ENCODE measurements at regions of chr11 and their contacts with region 1.

Region 1: DNA sequence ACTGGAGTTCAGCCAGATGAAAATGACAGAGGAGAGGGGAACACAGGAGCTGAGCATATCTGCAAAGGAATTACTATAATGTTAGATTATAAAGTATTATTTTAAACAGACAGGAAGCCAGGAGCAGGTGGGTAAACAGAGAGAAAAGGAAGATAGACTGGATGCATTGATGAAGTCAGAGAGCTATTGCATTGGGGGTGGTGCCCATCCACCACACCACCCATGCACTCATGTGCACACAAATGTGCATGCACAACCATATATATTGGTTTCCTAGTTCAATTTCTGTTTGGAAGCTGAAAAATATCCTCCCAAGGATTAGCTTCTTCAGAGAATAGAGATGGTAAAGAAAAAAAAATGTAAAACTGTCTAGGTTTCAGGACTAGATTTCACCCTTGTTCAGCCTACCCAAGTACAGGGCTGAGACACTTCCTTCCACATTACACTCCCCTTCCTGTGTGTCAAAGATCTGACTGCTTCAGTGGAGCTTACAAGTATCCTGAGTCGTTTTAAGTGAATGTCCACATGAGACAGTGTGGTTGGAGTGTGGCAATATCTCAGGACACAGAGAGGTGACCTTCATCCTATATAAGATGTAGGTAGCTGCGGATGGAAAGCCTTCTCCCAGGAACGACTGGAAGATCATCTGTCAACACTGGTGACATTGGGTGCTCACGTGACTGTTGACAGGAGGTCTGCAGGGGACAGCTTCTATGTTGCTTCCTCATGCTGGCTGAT is 12.2 kb upstream of the SMPD1 start:
- DNase-seq: no peak
- H3K4me3 ChIP-seq: no peak overlapping the region
- H3K27ac ChIP-seq: no peak overlapping the region
- H3K4me1 ChIP-seq: peaks cover 0 to 12% (median 0%) of the 10 kb centered on the region in 4 donors
- H3K27me3 ChIP-seq: no peaks in the 10 kb centered on the region
- CTCF ChIP-seq: no peak
- EP300 ChIP-seq: no peak
- POLR2A ChIP-seq: no peak

Region 2: DNA sequence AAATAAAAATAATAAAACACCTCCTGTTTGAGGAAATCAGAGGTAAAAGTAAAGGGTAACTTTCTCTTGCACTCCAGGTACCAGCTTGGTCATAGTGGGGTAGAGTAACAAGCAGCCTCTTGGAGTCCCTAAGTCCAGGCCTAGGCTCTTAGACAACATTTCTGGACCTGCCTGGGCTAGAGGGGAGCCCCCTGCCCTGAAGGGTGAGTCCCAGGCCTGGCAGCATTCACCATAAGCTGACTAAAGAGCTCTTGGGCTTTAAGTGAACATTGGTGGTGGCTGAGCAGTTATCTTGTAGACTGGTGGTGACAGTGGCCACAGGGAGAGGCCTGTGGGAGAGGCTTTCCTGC is 454.7 kb before region 1 on chr11:
- intact Hi-C with region 1: no loop called
- DNase-seq: no peak
- H3K4me3 ChIP-seq: no peak overlapping the region
- H3K27ac ChIP-seq: no peak overlapping the region
- H3K4me1 ChIP-seq: no peaks in the 10 kb centered on the region
- H3K27me3 ChIP-seq: no peaks in the 10 kb centered on the region
- CTCF ChIP-seq: no peak
- EP300 ChIP-seq: no peak
- POLR2A ChIP-seq: no peak

Region 3: DNA sequence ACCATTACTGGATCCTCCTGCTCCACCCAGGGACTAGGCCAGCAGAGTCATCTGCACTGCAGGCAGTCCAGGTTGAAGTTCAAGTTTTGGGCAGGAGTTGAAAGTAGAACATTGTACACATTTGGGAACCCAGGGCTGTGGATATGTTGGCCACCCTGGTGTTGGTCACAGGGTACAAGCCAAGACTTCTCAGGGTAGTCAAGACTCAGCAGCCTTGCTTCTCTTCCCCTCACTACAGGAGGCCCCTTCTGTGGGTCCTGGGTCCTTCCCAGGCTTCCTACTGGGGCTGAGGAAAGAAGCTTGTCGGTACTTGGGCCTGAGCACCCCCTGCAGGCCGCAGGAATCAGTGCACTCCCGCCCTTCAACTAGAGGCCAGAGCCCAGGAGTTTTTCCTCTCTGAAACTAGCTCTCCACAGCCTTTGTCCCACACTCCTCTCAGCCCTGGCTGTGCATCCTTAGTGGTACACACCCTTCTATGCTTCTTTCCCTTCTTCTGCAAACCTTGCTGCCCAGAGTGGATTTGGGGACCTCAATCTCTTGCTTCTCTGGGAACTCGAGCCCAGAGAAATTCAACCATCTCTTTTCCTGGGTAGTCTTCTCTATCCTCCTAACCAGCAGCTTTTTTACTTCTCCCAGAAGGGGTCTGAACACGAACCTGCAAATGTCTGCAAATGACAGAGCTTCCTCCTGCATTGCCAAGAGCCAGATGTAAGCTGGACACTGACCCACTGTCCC is 65.4 kb after region 1 on chr11:
- intact Hi-C with region 1: loop called (anchors 5 kb)
- DNase-seq: peak; percentile 63 to 83
- H3K4me3 ChIP-seq: no peak overlapping the region
- H3K27ac ChIP-seq: peak overlapping the region in 1 of 5 donors; percentile 18
- H3K4me1 ChIP-seq: peaks cover 0 to 10% (median 3%) of the 10 kb centered on the region in 4 donors
- H3K27me3 ChIP-seq: no peaks in the 10 kb centered on the region
- CTCF ChIP-seq: peak in 5 of 7 experiments; percentile 44 to 84 (median 79)
- EP300 ChIP-seq: no peak
- POLR2A ChIP-seq: no peak

Region 4: GRCh38 chr11:6505577-6506240 is 127.6 kb after region 1 on chr11:
- intact Hi-C with region 1: loop called (anchors 10 kb)
- DNase-seq: peak in 1 of 2 donors; percentile 71
- H3K4me3 ChIP-seq: no peak overlapping the region
- H3K27ac ChIP-seq: no peak overlapping the region
- H3K4me1 ChIP-seq: no peaks in the 10 kb centered on the region
- H3K27me3 ChIP-seq: no peaks in the 10 kb centered on the region
- CTCF ChIP-seq: peak in 5 of 7 experiments; percentile 55 to 78 (median 68)
- EP300 ChIP-seq: no peak
- POLR2A ChIP-seq: no peak

Measured in stomach (tissue), 19 donors.